ENCODE measurements at regions of chr10 and their contacts with region 1.

Region 1: DNA sequence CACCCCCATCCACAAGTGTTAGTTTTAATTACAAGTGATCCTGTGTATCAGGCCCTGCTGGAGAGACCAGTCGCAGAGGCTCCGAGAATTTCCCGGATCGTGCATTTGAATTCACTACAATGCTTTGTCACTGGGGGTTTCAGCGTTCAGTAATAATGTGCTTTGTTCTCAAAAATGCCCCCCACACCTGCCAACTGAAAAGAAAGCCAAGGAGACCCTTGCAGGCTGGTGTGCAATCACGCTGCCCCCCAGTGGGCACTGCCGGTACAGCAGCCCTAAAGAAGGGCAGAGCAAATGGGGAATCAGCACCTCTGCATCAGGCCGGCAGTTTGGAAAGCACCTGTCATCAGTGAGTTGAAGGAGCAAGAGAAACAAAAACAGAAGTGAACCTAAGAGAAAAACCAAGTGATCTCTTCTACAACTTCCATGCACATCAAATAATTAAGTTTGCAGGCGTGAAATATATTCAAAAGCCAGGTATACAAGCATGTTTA is 177.6 kb downstream of the PARD3 start:
- DNase-seq: peak; percentile 64 to 88
- ATAC-seq: peak; percentile 87
- H3K4me3 ChIP-seq: no peak overlapping the region
- H3K27ac ChIP-seq: no peak overlapping the region
- H3K4me1 ChIP-seq: no peaks in the 10 kb centered on the region
- H3K27me3 ChIP-seq: no peaks in the 10 kb centered on the region

Region 2: DNA sequence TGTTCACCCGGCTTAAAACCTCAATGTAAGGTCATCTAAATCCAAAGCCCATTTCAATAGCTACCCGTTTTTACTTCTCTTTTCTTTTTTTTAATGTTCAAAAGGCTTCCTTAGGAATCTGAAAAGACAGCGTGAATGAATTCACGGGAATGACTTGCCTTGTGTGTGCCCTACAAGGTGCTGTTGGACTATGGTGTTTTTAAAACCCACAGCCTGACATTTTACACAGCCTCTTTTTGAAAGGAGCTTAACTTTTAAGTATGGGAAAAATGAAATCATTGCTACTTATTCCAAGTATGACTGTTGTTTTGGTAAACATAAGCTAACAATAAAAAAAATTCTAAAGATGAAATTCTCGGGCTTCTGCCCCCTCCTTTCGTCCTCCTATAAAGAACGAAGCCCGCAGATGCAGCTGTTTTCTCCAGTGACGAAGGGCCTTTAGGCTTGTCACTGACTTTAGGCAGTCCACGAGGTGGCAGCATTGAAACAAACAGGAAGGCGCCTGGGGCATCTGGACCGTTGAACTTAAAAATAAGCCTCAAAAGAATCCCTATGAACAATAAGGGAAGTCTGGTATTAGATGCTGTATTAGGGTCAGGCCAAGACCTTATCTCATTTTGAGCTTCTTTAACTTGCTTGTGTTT is 1444.3 kb before region 1 on chr10:
- intact Hi-C with region 1: loop called (anchors 5 kb)
- DNase-seq: peak; percentile 87 to 89
- ATAC-seq: peak; percentile 88
- H3K4me3 ChIP-seq: no peak overlapping the region
- H3K27ac ChIP-seq: no peak overlapping the region
- H3K4me1 ChIP-seq: peaks cover 0 to 4% of the 10 kb centered on the region in 2 donors
- H3K27me3 ChIP-seq: no peaks in the 10 kb centered on the region

Region 3: GRCh38 chr10:34273340-34273739 is 364.1 kb before region 1 on chr10:
- intact Hi-C with region 1: loop called in 1 of 2 experiments (anchors 10 kb)
- DNase-seq: no peak
- ATAC-seq: no peak
- H3K4me3 ChIP-seq: no peak overlapping the region
- H3K27ac ChIP-seq: no peak overlapping the region
- H3K4me1 ChIP-seq: no peaks in the 10 kb centered on the region
- H3K27me3 ChIP-seq: no peaks in the 10 kb centered on the region

Region 4: DNA sequence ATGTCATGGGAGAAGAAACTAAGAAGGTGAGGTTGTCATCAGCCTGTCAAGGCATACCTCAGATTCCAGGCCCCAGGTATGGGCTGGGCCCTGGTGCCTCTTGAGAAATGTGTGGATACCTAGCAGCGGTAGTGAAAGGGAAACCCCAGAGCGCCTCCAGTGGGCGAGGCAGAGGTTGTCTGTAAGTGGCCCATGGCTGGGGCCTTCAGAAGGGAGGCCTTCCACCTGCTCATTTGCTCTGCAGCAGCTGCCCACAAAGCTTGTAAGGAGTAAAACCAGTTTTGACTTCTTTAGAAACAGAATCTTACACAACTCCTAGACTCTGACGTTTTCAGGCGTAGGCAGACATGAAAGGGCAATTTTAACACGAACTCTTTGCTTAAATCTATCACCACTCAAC is 332.3 kb before region 1 on chr10:
- intact Hi-C with region 1: no loop called
- DNase-seq: no peak
- ATAC-seq: no peak
- H3K4me3 ChIP-seq: no peak overlapping the region
- H3K27ac ChIP-seq: no peak overlapping the region
- H3K4me1 ChIP-seq: no peaks in the 10 kb centered on the region
- H3K27me3 ChIP-seq: no peaks in the 10 kb centered on the region

Region 5: DNA sequence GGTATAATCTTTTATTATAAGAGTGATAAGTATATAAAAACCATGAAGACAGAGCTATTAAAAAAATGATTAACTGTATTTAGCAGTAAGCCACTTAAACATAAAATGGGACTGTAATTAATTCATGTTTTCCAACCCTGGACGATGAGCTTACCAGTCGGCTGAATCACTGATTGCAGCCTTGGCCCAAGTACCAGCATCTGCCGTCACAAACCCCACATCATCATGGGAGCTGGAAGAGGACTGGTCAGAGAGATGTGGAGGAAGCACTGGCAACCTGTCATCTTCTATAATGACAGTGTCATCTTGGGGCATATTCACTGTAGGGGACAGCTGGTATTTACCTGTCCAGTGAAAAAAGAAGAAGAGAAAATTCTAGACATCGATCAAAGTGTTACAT is 296.0 kb before region 1 on chr10:
- intact Hi-C with region 1: loop called in 1 of 2 experiments (anchors 10 kb)
- DNase-seq: peak in 1 of 2 donors; percentile 51
- ATAC-seq: no peak
- H3K4me3 ChIP-seq: no peak overlapping the region
- H3K27ac ChIP-seq: no peak overlapping the region
- H3K4me1 ChIP-seq: no peaks in the 10 kb centered on the region
- H3K27me3 ChIP-seq: no peaks in the 10 kb centered on the region

Region 6: DNA sequence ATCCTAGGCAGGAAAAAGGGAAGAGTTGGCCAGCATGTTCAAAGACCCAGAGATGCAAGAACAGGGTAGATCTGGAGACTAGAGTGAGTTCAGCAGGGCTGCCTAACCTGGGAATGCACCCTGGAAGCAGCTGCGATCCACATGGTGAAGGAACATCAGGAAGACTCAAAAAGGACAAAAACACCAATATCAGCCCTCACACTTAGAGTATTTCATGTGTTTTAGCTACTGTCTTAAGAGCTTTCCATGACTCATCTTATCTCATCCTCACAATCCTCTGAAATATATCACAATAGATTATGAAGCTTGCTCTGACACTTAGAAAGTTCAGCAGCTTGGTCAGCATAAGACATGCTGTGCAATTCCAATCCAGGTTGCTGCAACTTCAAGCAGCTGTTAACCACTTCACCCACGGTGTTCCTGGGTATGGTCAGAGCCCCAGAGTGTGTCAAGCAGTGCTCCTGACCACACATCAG is 203.3 kb before region 1 on chr10:
- intact Hi-C with region 1: loop called in 1 of 2 experiments (anchors 10 kb)
- DNase-seq: no peak
- ATAC-seq: peak; percentile 73
- H3K4me3 ChIP-seq: no peak overlapping the region
- H3K27ac ChIP-seq: no peak overlapping the region
- H3K4me1 ChIP-seq: peaks cover 4% of the 10 kb centered on the region in 2 donors
- H3K27me3 ChIP-seq: no peaks in the 10 kb centered on the region

Region 7: DNA sequence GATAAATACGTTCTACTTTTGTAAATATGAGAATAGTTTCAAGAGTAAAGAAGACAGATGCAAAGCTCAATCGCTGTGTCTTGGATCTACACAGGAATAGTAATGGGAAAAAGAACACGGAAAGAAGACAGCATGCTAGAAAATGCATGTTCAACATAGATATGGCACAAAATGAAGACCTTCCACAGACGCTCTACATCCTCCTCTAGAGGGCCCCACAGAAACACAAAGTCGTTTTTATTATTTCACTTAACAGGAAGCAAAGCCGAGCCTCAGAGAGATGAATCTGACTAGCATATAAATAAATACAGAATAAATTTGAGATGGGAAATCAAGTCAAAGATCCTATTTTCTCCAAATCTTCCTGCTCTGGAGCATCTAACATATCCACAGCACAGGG is 114.9 kb before region 1 on chr10:
- intact Hi-C with region 1: loop called in 1 of 2 experiments (anchors 10 kb)
- DNase-seq: no peak
- ATAC-seq: no peak
- H3K4me3 ChIP-seq: no peak overlapping the region
- H3K27ac ChIP-seq: no peak overlapping the region
- H3K4me1 ChIP-seq: peaks cover 0 to 3% of the 10 kb centered on the region in 2 donors
- H3K27me3 ChIP-seq: no peaks in the 10 kb centered on the region